ENCODE measurements at regions of chr1 and their contacts with region 1.

Region 1: DNA sequence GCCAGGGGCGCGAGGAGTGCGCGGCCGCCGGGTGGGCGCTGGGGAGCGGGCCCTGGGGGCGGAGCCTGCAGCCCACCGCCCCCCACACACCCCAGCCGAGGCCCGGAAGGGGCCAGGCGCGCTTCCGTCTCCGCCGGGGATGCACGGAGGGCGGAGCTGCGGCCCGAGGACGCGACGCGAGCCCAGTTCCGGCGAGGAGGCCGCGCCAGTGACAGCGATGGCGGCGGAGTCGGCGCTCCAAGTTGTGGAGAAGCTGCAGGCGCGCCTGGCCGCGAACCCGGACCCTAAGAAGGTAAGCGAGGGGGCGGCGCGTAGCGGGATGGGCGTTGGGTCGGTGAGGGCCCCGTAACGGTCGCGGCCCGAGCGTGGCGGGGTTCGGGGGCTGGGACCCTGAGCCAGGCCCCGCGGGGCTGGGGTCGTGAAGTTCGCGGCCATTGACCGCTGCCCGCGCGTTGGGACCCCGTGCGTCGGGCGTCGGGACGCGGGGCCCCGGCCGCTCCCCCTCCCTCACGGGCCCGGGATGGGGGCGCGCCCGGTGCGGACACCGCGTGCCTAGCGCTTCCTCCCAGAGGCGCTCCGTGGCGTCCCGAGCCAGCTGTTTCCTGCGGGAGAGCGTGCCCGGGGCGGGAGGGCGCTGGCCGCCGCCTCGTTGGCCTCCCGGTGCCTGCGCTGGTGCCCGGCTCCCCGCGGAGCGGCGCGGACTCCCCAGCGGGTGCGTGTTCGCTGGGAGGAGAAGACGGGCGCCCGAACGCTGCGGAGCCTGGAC is at the start of gene ELOA:
- DNase-seq: peak; percentile 92
- CTCF ChIP-seq: no peak

Region 2: GRCh38 chr1:23691499-23692307 is 51.8 kb before region 1 on chr1 and contains the start of gene RPL11:
- CTCF ChIA-PET with region 1: interaction called, 24 read pairs
- POLR2A ChIA-PET with region 1: no interaction called
- DNase-seq: peak; percentile 95
- CTCF ChIP-seq: peak; percentile 60

Region 3: DNA sequence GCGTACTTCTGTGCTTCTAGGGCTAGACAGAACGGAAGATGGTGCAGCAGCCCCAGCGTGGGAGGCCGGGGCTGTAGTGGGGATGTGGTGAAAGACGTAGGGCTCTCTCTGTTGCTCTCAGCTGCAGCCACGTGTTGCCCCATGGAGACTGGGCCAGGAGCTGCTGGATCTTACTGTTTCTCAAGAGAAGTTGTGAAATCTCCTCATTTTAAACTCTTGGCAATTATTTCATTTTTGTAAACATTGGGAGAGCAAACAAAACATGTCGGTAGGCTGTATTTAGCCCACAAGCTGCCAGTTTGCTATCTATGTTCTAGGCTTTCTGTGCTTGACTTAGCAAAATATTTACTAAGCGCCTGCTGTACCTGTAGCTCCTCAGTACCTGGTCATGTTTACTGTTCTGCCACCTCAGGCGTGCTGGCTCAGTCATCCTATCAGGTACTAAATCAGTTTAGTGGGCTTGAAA is 16.1 kb before region 1 on chr1:
- CTCF ChIA-PET with region 1: interaction called, 11 read pairs
- POLR2A ChIA-PET with region 1: interaction called, 4 read pairs
- DNase-seq: peak; percentile 55
- CTCF ChIP-seq: no peak

Measured in GM10248 (cell line).